ENCODE measurements at regions of chr10 and their contacts with region 1.

Region 1: GRCh38 chr10:73110345-73110849 is at the start of gene NUDT13:
- DNase-seq: peak; percentile 56
- ATAC-seq: peak; percentile 98
- H3K4me3 Mint-ChIP-seq: peak within 1 kb of the TSS; percentile 80
- H3K27ac Mint-ChIP-seq: peak within 1 kb of the TSS; percentile 96
- H3K4me1 Mint-ChIP-seq: peaks cover 3% of the 10 kb centered on the region; the same call in 1 of the 2 replicates
- H3K27me3 Mint-ChIP-seq: peaks cover 2% of the 10 kb centered on the region; the same call in 1 of the 2 replicates
- CTCF ChIP-seq: no peak
- total RNA-seq, gene NUDT13: 1.8 to 2.9 TPM (median 2.0 TPM) in 3 replicates

Region 2: DNA sequence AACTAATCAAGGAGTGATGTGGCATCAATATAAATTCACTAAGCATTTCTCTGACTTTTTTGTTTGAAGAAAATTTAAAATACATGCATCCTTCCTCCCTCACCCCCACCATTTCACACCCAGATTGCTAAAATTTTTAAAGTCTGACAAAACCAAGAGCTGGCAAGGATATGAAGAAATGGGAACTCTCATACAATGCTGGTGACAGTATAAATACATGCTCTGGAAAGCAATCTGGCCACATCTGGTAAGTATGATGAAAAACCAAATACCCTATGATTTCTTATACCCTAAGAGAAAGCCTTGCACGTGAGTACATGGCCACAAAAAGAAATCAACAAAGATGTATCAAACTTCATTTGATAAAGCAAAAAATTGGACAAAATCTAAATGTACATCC is 45.0 kb before region 1 on chr10:
- CTCF ChIA-PET with region 1: no interaction called
- POLR2A ChIA-PET with region 1: no interaction called
- DNase-seq: no peak
- ATAC-seq: no peak
- H3K4me3 Mint-ChIP-seq: no peak overlapping the region
- H3K27ac Mint-ChIP-seq: no peak overlapping the region
- H3K4me1 Mint-ChIP-seq: no peaks in the 10 kb centered on the region; the same call in 1 of the 2 replicates
- H3K27me3 Mint-ChIP-seq: no peaks in the 10 kb centered on the region; the same call in 1 of the 2 replicates
- CTCF ChIP-seq: no peak

Region 3: DNA sequence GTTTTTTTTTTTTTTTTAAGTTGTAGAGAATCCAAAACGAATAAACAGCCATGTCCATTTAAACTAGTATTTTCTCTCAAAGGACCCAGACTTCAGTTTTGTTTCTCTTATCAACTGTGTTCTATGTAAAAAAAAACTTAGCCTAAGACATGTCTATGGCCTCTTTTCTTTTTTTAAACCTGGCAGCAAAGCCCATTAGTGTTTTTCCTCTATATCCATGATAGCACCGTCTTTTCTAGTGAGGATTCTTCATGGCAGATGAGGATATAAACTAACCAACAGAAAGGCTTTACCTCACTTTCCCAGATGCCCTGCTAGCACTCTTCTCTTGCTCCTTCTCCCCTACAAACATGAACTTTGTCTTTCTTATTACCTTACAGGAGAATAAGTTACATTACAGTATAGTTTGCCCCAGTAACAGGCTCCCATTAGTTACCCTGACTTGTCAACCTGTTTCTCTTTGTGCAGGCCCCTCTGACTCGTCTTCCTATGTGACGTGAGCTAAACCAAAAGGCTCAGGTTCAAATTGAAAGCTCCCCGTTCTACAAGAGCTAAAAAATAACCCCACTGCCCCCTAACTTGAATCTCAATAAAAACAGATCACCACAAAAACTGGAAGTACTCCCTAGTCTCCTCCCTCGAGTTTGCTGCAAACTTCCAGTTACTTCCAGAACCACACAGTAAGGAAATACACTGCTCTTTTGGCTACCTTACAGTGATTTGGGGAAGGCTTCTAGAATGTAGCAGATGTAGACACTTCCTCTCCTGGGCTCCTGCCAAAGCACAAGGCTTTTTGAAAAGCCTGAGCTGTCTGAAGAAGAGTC is 33.8 kb before region 1 on chr10:
- CTCF ChIA-PET with region 1: no interaction called
- POLR2A ChIA-PET with region 1: no interaction called
- DNase-seq: no peak
- ATAC-seq: no peak
- H3K4me3 Mint-ChIP-seq: no peak overlapping the region
- H3K27ac Mint-ChIP-seq: peak overlapping the region; percentile 69
- H3K4me1 Mint-ChIP-seq: peaks cover 7% of the 10 kb centered on the region
- H3K27me3 Mint-ChIP-seq: no peaks in the 10 kb centered on the region
- CTCF ChIP-seq: no peak

Region 4: DNA sequence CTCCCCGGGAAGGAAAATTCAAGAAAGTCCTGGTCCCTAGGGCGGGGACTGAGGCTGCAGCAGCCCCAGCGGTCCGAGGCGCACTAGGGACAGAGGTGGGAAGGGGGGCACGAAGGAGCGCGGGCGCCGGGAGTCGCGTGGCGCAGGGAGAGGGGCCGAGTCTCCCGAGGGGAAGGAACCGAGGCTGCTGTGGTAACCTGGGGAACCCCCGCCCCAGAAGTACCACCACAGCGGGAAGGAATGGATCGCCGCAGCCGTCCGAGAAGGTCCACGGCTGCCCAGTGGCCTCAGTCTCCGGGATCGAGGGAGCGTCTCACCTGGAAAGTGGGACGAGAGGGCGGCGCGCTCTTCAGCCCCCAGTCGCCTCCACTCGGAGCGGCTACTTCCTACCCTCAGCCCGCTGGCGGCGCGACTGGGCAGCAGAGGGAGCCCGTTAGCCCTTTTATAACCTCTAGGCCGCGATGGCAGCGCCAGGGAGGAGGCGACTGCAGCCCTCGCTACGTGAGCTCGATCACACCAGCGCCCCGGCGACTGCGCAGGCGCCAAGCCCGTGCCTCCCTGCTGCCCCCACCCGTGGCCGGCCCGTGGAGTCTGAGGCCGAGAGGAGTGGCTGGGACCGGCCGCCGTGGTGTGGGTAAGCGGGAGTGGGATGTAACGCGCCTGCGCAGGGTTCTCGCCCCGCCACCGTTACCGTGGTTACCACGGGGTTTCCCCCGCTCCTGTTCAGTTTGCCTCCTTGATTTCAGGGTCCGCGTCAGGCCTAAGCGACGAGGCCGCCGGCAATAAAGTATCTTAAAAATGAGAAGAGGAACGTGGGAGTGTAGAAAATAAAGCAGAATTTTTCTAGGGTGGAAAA is 13.7 kb before region 1 on chr10 and contains the start of gene P4HA1:
- CTCF ChIA-PET with region 1: interaction called, 19 read pairs
- POLR2A ChIA-PET with region 1: no interaction called
- DNase-seq: peak; percentile 96
- ATAC-seq: peak; percentile 94
- H3K4me3 Mint-ChIP-seq: peak within 1 kb of the TSS; percentile 88
- H3K27ac Mint-ChIP-seq: peak within 1 kb of the TSS; percentile 95
- H3K4me1 Mint-ChIP-seq: peaks cover 18% of the 10 kb centered on the region
- H3K27me3 Mint-ChIP-seq: no peaks in the 10 kb centered on the region
- CTCF ChIP-seq: peak; percentile 31; the same call in 1 of the 2 replicates
- total RNA-seq, gene P4HA1: 34.4 to 62.8 TPM (median 59.9 TPM) in 3 replicates

Measured in WTC11 (cell line).